A673 (cell line): ENCODE measurements at regions of chr17 and their contacts with region 1.

Region 1: DNA sequence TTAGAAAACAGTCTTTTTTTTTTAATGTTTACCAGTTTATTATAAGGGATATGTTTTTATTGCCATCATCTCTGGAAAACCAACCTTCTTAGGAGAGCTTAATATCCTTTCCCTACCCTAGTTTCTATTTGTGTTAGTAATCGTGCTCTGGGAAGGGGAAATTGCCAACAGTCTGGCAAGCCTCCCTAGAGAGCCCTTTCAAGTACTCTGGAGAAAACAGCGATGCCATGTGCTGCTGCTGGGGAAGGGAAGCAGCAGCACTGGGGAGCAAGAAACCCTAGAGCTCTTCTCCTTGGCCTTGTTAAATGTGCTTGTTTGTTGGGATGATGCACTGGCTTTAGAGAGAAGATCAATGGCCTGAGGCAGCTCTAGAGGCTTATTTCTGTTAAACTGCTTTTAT is 10.3 kb downstream of the RETREG3 start:
- DNase-seq: no peak
- H3K4me3 ChIP-seq: no peak overlapping the region
- H3K27ac ChIP-seq: no peak overlapping the region
- H3K4me1 ChIP-seq: no peaks in the 10 kb centered on the region
- H3K27me3 ChIP-seq: no peaks in the 10 kb centered on the region
- CTCF ChIP-seq: no peak

Region 2: DNA sequence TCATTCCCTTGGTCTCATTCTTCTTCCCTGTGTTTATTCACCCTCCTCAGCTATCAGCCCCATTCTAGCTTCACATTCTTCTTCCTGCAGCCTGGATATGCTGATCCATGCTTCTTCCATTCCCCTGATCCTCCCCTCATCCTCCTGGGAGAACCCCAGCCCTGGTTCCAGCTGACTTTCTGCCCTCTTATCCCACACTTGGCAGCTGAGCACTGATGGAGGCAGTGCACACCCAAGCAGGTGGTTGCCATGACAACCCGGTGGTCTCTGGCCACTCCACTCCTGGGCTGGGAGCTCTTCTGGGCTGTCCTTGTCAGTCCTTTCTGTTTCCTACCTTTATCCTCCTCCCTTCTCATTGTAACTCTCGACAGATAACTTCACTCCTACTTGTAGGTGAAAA is 43.4 kb after region 1 on chr17:
- CTCF ChIA-PET with region 1: no interaction called
- POLR2A ChIA-PET with region 1: no interaction called
- intact Hi-C with region 1: no loop called
- DNase-seq: no peak
- H3K4me3 ChIP-seq: no peak overlapping the region
- H3K27ac ChIP-seq: no peak overlapping the region
- H3K4me1 ChIP-seq: no peaks in the 10 kb centered on the region
- H3K27me3 ChIP-seq: no peaks in the 10 kb centered on the region
- CTCF ChIP-seq: no peak

Region 3: GRCh38 chr17:42698736-42699414 is 100.0 kb after region 1 on chr17:
- CTCF ChIA-PET with region 1: interaction called, 12 read pairs
- POLR2A ChIA-PET with region 1: no interaction called
- intact Hi-C with region 1: no loop called
- DNase-seq: no peak
- H3K4me3 ChIP-seq: no peak overlapping the region
- H3K27ac ChIP-seq: no peak overlapping the region
- H3K4me1 ChIP-seq: no peaks in the 10 kb centered on the region
- H3K27me3 ChIP-seq: no peaks in the 10 kb centered on the region
- CTCF ChIP-seq: no peak

Region 4: GRCh38 chr17:42720996-42721583 is 122.2 kb after region 1 on chr17:
- CTCF ChIA-PET with region 1: no interaction called
- POLR2A ChIA-PET with region 1: no interaction called
- intact Hi-C with region 1: no loop called
- DNase-seq: peak; percentile 57
- H3K4me3 ChIP-seq: no peak overlapping the region
- H3K27ac ChIP-seq: no peak overlapping the region
- H3K4me1 ChIP-seq: no peaks in the 10 kb centered on the region
- H3K27me3 ChIP-seq: no peaks in the 10 kb centered on the region
- CTCF ChIP-seq: peak; percentile 61